Activated CD4-positive, alpha-beta memory T cell treated with anti-CD3 and anti-CD28 coated beads for 36 hours (primary cell): ENCODE measurements at regions of chr13 and their contacts with region 1.

Region 1: GRCh38 chr13:40517486-40518480 is 148.7 kb downstream of the FOXO1 start:
- DNase-seq: peak; percentile 48
- H3K4me3 Mint-ChIP-seq: peak overlapping the region; percentile 61
- H3K27ac Mint-ChIP-seq: peak overlapping the region; percentile 86
- H3K4me1 Mint-ChIP-seq: peaks cover 71% of the 10 kb centered on the region
- H3K27me3 Mint-ChIP-seq: no peaks in the 10 kb centered on the region

Region 2: GRCh38 chr13:40190641-40191100 is 327.1 kb before region 1 on chr13:
- CTCF ChIA-PET with region 1: no interaction called
- POLR2A ChIA-PET with region 1: no interaction called
- intact Hi-C with region 1: loop called (anchors 5 kb)
- DNase-seq: peak; percentile 79
- H3K4me3 Mint-ChIP-seq: peak overlapping the region; percentile 9
- H3K27ac Mint-ChIP-seq: peak overlapping the region; percentile 85
- H3K4me1 Mint-ChIP-seq: peaks cover 66% of the 10 kb centered on the region
- H3K27me3 Mint-ChIP-seq: no peaks in the 10 kb centered on the region

Region 3: GRCh38 chr13:40438999-40439797 is 78.6 kb before region 1 on chr13:
- CTCF ChIA-PET with region 1: no interaction called
- POLR2A ChIA-PET with region 1: no interaction called
- intact Hi-C with region 1: loop called (anchors 2 kb)
- DNase-seq: peak; percentile 42
- H3K4me3 Mint-ChIP-seq: peak overlapping the region; percentile 59
- H3K27ac Mint-ChIP-seq: peak overlapping the region; percentile 71
- H3K4me1 Mint-ChIP-seq: peaks cover 34% of the 10 kb centered on the region
- H3K27me3 Mint-ChIP-seq: no peaks in the 10 kb centered on the region

Region 4: DNA sequence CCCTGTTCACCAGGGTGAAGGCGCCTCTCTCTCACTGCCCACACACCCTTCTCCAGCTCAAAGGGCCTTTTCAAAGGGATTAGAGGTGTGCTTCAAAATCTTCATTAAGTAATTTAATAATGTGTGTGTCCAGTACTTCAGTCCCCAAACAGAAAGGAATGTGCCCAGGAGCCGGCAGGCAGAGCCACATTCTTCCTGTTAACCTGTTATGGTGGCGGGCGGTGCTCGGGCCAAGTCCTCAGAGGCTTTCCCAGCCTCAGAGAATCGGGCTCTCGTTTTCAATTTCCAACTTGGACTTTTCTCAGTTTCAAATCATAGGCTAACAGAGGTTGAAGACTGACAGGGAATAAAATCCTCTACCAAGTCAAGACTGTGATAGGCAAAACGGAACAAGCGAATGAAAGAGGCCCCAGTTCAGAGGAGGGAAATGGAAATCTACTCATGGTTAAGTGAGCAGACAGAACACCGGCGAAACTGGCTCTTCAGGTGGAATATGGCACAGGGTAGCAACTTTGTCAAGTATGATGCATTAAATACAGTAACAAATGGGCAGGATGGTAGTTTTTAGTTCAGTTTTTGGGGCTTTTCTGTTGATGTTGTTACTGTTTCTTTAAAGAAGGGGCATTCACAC is 80.1 kb after region 1 on chr13:
- CTCF ChIA-PET with region 1: no interaction called
- POLR2A ChIA-PET with region 1: no interaction called
- intact Hi-C with region 1: loop called (anchors 1 kb)
- DNase-seq: peak; percentile 24
- H3K4me3 Mint-ChIP-seq: peak overlapping the region; percentile 39
- H3K27ac Mint-ChIP-seq: peak overlapping the region; percentile 85
- H3K4me1 Mint-ChIP-seq: peaks cover 87% of the 10 kb centered on the region
- H3K27me3 Mint-ChIP-seq: no peaks in the 10 kb centered on the region